ENCODE measurements at regions of chr21 and their contacts with region 1.

Region 1: GRCh38 chr21:15742052-15742670 is 12.4 kb downstream of the USP25 start:
- DNase-seq: no peak
- ATAC-seq: no peak
- H3K4me3 ChIP-seq: no peak overlapping the region
- H3K4me3 Mint-ChIP-seq: peak overlapping the region; percentile 11
- H3K27ac ChIP-seq: no peak overlapping the region
- H3K27ac Mint-ChIP-seq: no peak overlapping the region
- H3K4me1 ChIP-seq: peaks cover 44% of the 10 kb centered on the region
- H3K4me1 Mint-ChIP-seq: peaks cover 89% of the 10 kb centered on the region
- H3K27me3 ChIP-seq: no peaks in the 10 kb centered on the region
- H3K27me3 Mint-ChIP-seq: no peaks in the 10 kb centered on the region
- CTCF ChIP-seq: no peak

Region 2: GRCh38 chr21:15604424-15604823 is 137.7 kb before region 1 on chr21:
- CTCF ChIA-PET with region 1: no interaction called
- POLR2A ChIA-PET with region 1: no interaction called
- intact Hi-C with region 1: no loop called
- DNase-seq: no peak
- ATAC-seq: no peak
- H3K4me3 ChIP-seq: no peak overlapping the region
- H3K4me3 Mint-ChIP-seq: no peak overlapping the region
- H3K27ac ChIP-seq: no peak overlapping the region
- H3K27ac Mint-ChIP-seq: no peak overlapping the region
- H3K4me1 ChIP-seq: no peaks in the 10 kb centered on the region
- H3K4me1 Mint-ChIP-seq: no peaks in the 10 kb centered on the region
- H3K27me3 ChIP-seq: no peaks in the 10 kb centered on the region
- H3K27me3 Mint-ChIP-seq: peaks cover 13% of the 10 kb centered on the region
- CTCF ChIP-seq: no peak

Region 3: DNA sequence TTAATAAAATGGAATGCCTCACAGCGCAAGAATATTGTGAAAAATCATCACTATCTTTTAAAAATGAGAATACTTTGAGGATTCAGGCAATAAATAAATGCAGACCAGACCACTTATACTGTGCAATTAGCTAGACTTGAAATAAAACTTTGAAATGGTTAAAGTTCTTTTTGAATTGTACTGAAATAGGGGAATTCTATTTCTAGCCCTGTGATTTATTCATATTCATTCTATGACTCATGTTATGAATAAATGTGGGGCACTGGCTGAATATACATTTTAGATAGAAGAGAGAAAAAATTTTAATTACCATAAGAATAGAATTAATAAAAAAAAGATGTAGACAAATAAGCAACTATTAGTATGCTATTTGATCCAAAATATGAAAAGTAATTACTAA is 28.7 kb before region 1 on chr21:
- CTCF ChIA-PET with region 1: no interaction called
- POLR2A ChIA-PET with region 1: no interaction called
- intact Hi-C with region 1: loop called in 1 of 2 experiments (anchors 2 kb)
- DNase-seq: no peak
- ATAC-seq: no peak
- H3K4me3 ChIP-seq: no peak overlapping the region
- H3K4me3 Mint-ChIP-seq: no peak overlapping the region
- H3K27ac ChIP-seq: no peak overlapping the region
- H3K27ac Mint-ChIP-seq: no peak overlapping the region
- H3K4me1 ChIP-seq: no peaks in the 10 kb centered on the region
- H3K4me1 Mint-ChIP-seq: no peaks in the 10 kb centered on the region
- H3K27me3 ChIP-seq: no peaks in the 10 kb centered on the region
- H3K27me3 Mint-ChIP-seq: peaks cover 4% of the 10 kb centered on the region
- CTCF ChIP-seq: no peak

Region 4: DNA sequence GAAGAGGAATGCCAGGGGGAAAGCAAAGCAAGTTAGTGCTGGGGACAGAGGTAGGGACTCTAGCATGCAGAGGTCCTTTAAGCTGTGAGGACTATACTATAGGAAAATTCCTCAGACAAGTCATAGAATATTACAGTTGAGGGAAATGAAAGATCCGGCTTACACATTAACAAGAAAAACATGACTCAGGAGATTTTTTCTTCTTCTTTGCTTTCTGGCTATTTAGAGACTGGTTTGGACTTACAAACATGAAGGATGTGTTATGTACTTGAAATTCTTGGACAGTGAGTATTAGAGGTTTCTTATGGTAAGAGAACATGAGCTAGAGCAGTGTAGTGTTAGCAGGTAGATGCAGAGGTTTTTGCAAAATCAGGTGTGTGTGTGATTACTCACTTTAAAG is 12.5 kb after region 1 on chr21:
- CTCF ChIA-PET with region 1: interaction called, 3 read pairs
- POLR2A ChIA-PET with region 1: no interaction called
- intact Hi-C with region 1: loop called in 1 of 2 experiments (anchors 2 kb)
- DNase-seq: no peak
- ATAC-seq: no peak
- H3K4me3 ChIP-seq: no peak overlapping the region
- H3K4me3 Mint-ChIP-seq: no peak overlapping the region
- H3K27ac ChIP-seq: no peak overlapping the region
- H3K27ac Mint-ChIP-seq: no peak overlapping the region
- H3K4me1 ChIP-seq: peaks cover 26% of the 10 kb centered on the region
- H3K4me1 Mint-ChIP-seq: peaks cover 87% of the 10 kb centered on the region
- H3K27me3 ChIP-seq: no peaks in the 10 kb centered on the region
- H3K27me3 Mint-ChIP-seq: no peaks in the 10 kb centered on the region
- CTCF ChIP-seq: no peak